HCT116 (cell line): ENCODE measurements at regions of chr5 and their contacts with region 1.

Region 1: DNA sequence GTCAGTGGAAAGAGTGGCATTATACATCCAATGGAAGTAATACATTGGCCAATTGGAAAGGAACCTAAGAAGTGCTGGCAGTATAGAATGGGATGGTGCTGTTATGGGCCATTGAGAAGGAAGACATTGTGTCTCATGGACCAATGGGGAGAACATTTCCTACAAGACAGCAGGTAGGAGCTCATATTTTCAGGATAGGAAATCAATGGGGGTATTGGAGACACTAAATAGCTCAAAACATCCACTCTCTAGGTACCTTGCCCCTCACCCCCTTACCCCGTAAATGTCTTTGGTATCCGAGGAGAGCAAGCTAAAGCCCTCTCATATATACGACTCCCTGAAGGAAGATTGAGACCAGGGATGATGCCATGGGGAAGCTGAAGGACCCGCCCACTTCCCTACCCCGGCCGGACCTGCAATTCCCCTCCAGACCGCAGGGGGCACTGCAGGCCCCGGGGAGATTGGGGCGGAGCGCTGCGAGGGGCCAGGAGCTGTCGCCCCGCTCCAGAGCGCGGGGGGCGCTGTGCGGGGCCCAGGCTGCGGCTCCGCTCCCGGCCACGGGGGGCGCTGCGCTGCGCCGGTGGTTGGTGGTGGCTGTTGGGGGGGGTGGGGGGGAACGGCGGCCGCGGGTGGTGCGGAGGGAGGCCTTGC is at the start of gene KDM3B:
- DNase-seq: peak; percentile 76
- ATAC-seq: peak; percentile 84
- H3K4me3 ChIP-seq: peak within 1 kb of the TSS; percentile 83 to 98
- H3K27ac ChIP-seq: peak within 1 kb of the TSS; percentile 90
- H3K4me1 ChIP-seq: peaks cover 0 to 13% of the 10 kb centered on the region in 2 experiments; a peak in 2 of 4 replicates
- H3K27me3 ChIP-seq: no peaks in the 10 kb centered on the region
- CTCF ChIP-seq: peak; percentile 99 to 100 (median 99)
- POLR2A ChIP-seq: no peak
- RAD21 ChIP-seq: 0 out of 2 replicates have a peak, but pooled peaks have one; percentile 31
- total RNA-seq, gene KDM3B: 65.1 TPM

Region 2: GRCh38 chr5:138331449-138332368 is 20.5 kb before region 1 on chr5 and contains the start of gene CDC25C:
- CTCF ChIA-PET with region 1: interaction called, 22 read pairs
- POLR2A ChIA-PET with region 1: interaction called, 59 read pairs
- RAD21 ChIA-PET with region 1: no interaction called
- intact Hi-C with region 1: no loop called
- DNase-seq: peak; percentile 97
- ATAC-seq: peak; percentile 98
- H3K4me3 ChIP-seq: peak within 1 kb of the TSS; percentile 87 to 88
- H3K27ac ChIP-seq: peak within 1 kb of the TSS; percentile 25; the same call in 1 of the 2 replicates
- H3K4me1 ChIP-seq: peaks cover 4 to 26% of the 10 kb centered on the region in 2 experiments; a peak in 3 of 4 replicates
- H3K27me3 ChIP-seq: no peaks in the 10 kb centered on the region
- CTCF ChIP-seq: no peak
- POLR2A ChIP-seq: peak; percentile 28
- RAD21 ChIP-seq: no peak
- total RNA-seq, gene CDC25C: 19.3 TPM

Region 3: DNA sequence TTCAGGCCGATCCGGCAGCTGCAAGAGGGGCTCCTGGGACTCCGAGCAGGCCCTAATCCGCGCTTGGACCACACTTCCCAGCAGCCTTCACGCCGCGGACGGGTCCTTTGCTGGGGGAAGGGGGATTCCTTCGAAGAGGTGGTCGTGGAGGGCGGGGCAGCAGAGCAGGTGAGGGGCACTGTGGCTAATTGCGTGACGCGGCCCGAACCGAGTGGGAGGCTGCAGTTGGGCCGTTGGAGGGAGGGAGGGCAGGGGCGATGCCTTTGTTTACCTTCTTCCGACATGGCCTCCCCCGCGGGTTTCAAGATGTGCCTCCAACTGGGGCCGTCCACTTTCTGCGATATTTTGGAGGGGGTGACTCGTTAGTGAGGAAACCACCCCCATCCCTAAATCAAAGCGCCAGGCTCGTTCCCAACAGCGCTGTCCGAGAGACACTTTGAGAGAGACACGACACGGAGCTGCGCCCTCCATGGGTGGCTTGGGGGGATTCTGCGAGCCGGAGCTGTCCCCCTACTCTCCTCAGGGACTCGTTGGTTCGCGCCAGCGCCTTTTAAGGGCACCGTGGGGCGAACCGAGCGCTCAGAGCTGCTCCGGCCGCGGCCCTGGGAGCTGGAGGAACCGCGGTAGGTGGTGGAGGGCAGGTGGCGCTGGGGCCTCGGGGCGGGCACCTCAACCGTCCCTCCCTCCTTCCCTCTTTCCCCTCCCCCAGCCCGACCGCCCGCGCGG is 14.3 kb before region 1 on chr5 and contains the start of gene FAM53C:
- CTCF ChIA-PET with region 1: interaction called, 40 read pairs
- POLR2A ChIA-PET with region 1: interaction called, 59 read pairs
- RAD21 ChIA-PET with region 1: no interaction called
- intact Hi-C with region 1: no loop called
- DNase-seq: peak; percentile 89
- ATAC-seq: peak; percentile 85
- H3K4me3 ChIP-seq: peak within 1 kb of the TSS; percentile 67 to 74
- H3K27ac ChIP-seq: peak within 1 kb of the TSS; percentile 85
- H3K4me1 ChIP-seq: peaks cover 0 to 28% of the 10 kb centered on the region in 2 experiments; a peak in 2 of 4 replicates
- H3K27me3 ChIP-seq: no peaks in the 10 kb centered on the region
- CTCF ChIP-seq: no peak
- POLR2A ChIP-seq: peak; percentile 99
- RAD21 ChIP-seq: no peak
- total RNA-seq, gene FAM53C: 36.4 TPM